PC-9 (cell line): ENCODE measurements at regions of chr12 and their contacts with region 1.

Region 1: DNA sequence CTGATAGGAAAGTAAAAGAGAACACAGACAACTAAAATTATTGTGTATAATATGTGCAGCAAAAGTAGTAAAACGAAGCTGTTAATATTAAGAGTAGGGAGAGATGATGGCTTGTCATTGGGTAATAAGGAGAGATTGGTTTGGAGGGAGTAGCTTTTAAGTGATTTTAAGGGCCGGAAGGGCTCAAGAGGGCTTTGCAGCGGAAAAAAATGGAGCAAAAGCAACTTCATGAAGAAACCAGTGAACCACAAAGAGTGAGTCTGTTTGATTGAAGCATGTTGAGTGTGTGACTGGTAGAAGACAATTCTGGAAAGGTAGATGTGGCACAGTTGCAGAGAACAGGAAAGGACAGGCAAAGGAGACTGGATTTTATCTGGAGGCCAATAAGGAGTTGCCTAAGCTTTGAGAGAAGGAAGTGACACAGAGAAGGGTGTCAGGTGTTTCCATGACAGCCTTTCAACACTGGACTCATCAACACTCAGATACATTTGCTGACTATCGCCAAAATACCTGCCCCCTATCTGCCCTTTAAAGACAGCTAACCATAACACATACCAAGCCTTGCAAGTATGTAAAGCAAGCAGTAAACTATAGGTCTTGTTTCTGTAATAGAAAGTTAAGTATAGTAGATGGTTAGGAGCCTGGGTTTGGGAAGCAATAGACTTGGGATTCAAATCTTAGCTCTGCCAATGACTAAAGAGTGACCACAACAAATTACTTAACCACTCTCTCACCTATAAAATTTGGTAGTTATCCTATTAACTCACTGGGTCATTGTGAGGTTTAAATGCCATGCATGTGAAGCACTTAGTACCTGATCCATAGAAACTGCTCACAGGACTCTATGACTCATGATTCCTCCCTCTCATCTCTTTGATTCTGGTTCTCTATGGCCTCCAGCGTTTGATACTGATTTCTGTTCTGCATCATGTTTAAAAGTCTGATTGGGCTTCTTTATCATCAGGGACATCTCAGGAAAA is 117.3 kb upstream of the LMNTD1 start:
- DNase-seq: peak in 1 of 2 experiments; percentile 71
- H3K4me3 ChIP-seq: no peak overlapping the region
- H3K27ac ChIP-seq: no peak overlapping the region
- H3K4me1 ChIP-seq: peaks cover 8% of the 10 kb centered on the region; the same call in 1 of the 2 replicates
- H3K27me3 ChIP-seq: no peaks in the 10 kb centered on the region
- CTCF ChIP-seq: no peak

Region 2: DNA sequence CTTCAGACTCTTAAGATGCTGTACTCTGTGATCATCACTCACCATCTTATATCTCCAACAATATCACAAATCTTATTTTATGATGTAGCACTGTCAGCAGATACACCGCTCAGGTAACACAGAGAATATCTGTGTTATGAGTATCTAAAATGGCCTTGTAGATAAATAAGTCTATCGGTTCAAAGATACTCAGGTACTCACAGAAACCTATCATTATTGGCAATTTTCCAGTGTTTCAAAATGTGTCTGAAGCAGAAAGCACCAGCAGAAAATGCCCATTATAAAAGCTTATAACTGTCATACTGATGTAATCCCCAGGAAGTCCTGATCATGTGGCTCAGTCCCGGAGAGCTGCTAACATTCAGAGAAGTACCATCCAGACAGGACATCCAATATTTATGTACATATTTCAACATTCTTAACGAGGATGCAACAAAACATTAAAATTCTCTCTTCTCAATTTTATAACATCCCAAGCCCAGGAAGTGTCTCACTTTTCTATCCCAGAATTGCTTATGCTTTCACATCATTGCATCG is 73.4 kb after region 1 on chr12:
- CTCF ChIA-PET with region 1: no interaction called
- POLR2A ChIA-PET with region 1: interaction called, 11 read pairs
- intact Hi-C with region 1: no loop called
- DNase-seq: no peak
- H3K4me3 ChIP-seq: no peak overlapping the region
- H3K27ac ChIP-seq: no peak overlapping the region
- H3K4me1 ChIP-seq: no peaks in the 10 kb centered on the region
- H3K27me3 ChIP-seq: no peaks in the 10 kb centered on the region
- CTCF ChIP-seq: no peak

Region 3: GRCh38 chr12:25825446-25825845 is 155.1 kb after region 1 on chr12:
- CTCF ChIA-PET with region 1: no interaction called
- POLR2A ChIA-PET with region 1: no interaction called
- intact Hi-C with region 1: no loop called
- DNase-seq: no peak
- H3K4me3 ChIP-seq: no peak overlapping the region
- H3K27ac ChIP-seq: no peak overlapping the region
- H3K4me1 ChIP-seq: peaks cover 21% of the 10 kb centered on the region
- H3K27me3 ChIP-seq: no peaks in the 10 kb centered on the region
- CTCF ChIP-seq: no peak